ENCODE measurements at regions of chr17 and their contacts with region 1.

Region 1: GRCh38 chr17:78360371-78361224 is 721 bp upstream of the SOCS3 start:
- DNase-seq: peak; percentile 81
- H3K4me3 ChIP-seq: peak overlapping the region; percentile 52 to 87 (median 56)
- H3K27ac ChIP-seq: peak overlapping the region; percentile 39
- H3K4me1 ChIP-seq: peaks cover 34% of the 10 kb centered on the region
- H3K27me3 ChIP-seq: no peaks in the 10 kb centered on the region
- CTCF ChIP-seq: peak; percentile 80 to 98

Region 2: DNA sequence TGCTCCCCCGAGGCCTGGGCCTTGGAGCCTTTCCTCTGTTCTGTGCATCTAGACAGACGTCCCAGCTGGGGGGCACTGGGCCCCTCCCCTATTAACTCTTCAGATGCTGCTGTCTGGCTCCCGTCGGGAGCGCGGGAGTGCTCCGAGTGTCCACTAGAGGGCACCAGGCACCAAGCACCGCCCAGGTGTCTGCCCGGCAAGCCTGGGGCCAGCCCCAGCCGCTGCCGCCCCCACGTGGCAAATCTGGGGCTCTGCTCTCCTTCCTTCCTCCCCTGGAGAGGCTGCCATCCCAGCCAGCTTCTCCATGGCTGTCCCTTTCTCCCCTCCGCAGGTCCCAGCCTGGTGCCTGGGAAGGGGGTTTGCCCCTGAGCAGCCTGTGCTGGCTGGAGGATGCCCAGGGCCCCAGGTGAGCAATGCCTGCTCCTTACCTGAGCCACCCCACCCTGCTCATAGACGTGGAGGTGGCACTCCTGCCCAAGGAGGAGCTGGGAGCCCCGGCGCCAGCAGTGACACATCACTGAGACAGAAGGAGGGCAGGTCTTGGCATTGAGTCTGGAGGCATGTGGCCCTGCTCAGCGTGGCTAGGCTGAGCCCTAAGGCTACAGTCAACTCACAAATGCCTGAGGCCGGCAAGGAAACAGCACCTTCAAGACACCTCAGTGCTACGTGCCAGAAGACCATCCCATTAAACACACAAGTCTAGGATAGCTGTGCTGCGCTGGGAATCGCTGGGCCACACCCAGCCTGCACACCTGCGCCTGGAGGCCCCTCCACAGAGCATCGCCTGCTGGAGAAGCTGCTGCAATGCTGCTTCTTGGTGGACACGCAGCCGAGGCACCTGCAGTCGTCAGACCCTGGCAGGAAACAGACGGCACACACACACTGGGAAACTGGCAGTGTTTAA is 109.5 kb before region 1 on chr17:
- CTCF ChIA-PET with region 1: interaction called, 8 read pairs
- dilution Hi-C with region 1: no loop called
- in situ Hi-C with region 1: no loop called
- intact Hi-C with region 1: loop called (anchors 2 kb)
- DNase-seq: peak; percentile 81
- H3K4me3 ChIP-seq: peak overlapping the region in 2 of 3 experiments; percentile 27 to 38
- H3K27ac ChIP-seq: no peak overlapping the region
- H3K4me1 ChIP-seq: peaks cover 10% of the 10 kb centered on the region
- H3K27me3 ChIP-seq: no peaks in the 10 kb centered on the region
- CTCF ChIP-seq: peak; percentile 96 to 99

Region 3: DNA sequence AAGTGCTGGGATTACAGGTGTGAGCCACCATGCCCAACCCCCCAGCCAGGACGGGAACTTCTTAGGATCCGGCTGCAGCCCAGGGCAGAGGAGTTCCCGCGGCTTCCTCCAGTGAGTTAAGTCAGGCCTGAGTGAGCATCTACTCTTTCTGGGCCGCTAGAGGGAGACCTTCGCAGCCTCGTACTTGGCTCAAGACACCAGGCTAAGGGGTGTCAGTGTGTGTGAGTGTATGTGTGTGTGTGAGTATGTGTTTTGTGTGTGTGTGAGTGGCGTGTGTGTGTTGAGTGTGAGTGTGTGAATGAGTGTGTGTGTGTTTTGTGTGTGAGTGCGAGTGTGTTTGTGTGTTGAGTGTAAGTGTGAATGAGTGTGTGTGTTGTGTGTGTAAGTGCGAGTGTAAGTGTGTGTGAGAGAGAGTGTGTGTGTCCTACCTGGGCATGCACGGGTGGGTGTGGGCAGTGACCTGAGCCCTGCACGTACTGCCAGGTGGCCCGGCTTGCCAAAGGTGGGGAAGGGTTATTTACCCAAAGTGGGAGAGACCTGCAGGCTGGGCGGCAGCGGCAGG is 70.7 kb before region 1 on chr17:
- CTCF ChIA-PET with region 1: no interaction called
- dilution Hi-C with region 1: loop called (anchors 5 kb)
- in situ Hi-C with region 1: loop called in 1 of 2 experiments (anchors 5 kb)
- intact Hi-C with region 1: loop called (anchors 1 kb)
- DNase-seq: peak; percentile 80
- H3K4me3 ChIP-seq: no peak overlapping the region
- H3K27ac ChIP-seq: no peak overlapping the region
- H3K4me1 ChIP-seq: peaks cover 9% of the 10 kb centered on the region
- H3K27me3 ChIP-seq: no peaks in the 10 kb centered on the region
- CTCF ChIP-seq: peak; percentile 90 to 91

Region 4: DNA sequence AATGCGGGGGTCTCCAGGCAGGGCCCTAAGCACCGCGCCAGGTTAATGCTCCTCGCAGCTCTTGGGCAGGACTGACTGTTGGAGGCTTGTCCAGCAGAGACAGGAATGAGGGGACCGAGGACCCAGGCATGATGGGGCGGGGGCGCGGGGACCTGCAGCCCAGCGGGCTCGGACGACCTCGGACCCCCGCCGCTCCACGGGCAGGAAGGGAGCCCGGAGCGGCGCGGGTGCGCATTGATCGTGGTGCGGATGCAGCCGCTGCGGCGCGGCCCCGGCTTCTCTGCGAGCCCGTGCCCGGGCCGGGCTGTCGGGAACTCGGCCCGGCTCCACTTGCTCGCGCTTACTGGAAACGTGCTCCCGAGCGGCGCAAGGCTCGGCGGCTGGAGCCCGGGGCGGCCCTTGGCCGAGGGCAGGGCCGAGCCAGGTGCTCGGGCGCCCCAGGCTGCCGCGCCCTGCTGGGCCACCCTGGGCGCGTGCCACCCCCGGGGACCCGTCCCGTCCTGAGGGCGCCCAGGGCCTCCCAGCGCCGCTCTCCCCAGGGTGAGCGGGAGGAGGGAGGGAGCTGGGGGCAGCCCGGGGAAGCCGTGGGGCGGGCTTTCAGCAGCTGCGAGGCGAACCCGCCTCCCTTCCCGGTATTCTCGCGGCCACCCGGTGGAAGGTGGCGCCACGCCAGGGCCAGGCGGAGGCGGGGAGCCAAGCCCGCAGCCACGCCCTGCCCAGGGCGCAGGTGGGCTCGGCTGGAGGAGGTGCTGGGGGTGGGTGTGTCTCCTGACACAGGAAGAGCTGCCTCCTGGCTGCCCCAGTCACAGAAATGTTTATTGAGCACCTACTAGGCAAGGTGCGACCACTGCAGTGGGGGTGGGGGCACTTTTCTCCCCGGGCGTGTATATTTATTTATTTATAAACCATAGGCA is 46.6 kb before region 1 on chr17:
- CTCF ChIA-PET with region 1: no interaction called
- dilution Hi-C with region 1: no loop called
- in situ Hi-C with region 1: no loop called
- intact Hi-C with region 1: loop called (anchors 1 kb)
- DNase-seq: peak; percentile 93
- H3K4me3 ChIP-seq: peak overlapping the region in 2 of 3 experiments; percentile 33 to 46
- H3K27ac ChIP-seq: peak overlapping the region; percentile 79
- H3K4me1 ChIP-seq: peaks cover 46% of the 10 kb centered on the region
- H3K27me3 ChIP-seq: no peaks in the 10 kb centered on the region
- CTCF ChIP-seq: no peak

Region 5: GRCh38 chr17:78341559-78342448 is 18.8 kb before region 1 on chr17:
- CTCF ChIA-PET with region 1: no interaction called
- dilution Hi-C with region 1: no loop called
- in situ Hi-C with region 1: no loop called
- intact Hi-C with region 1: loop called (anchors 1 kb)
- DNase-seq: peak; percentile 65
- H3K4me3 ChIP-seq: peak overlapping the region in 2 of 3 experiments; percentile 17 to 31
- H3K27ac ChIP-seq: peak overlapping the region; percentile 82
- H3K4me1 ChIP-seq: peaks cover 37% of the 10 kb centered on the region
- H3K27me3 ChIP-seq: no peaks in the 10 kb centered on the region
- CTCF ChIP-seq: no peak

Region 6: GRCh38 chr17:78378225-78379130 is 17.9 kb after region 1 on chr17 and contains the start of gene PGS1:
- CTCF ChIA-PET with region 1: no interaction called
- dilution Hi-C with region 1: no loop called
- in situ Hi-C with region 1: no loop called
- intact Hi-C with region 1: loop called (anchors 1 kb)
- DNase-seq: peak; percentile 72
- H3K4me3 ChIP-seq: peak within 1 kb of the TSS; percentile 77 to 90 (median 89)
- H3K27ac ChIP-seq: peak within 1 kb of the TSS; percentile 92
- H3K4me1 ChIP-seq: peaks cover 43% of the 10 kb centered on the region
- H3K27me3 ChIP-seq: no peaks in the 10 kb centered on the region
- CTCF ChIP-seq: no peak
- total RNA-seq, gene PGS1: 29.1 to 31.5 TPM

Region 7: DNA sequence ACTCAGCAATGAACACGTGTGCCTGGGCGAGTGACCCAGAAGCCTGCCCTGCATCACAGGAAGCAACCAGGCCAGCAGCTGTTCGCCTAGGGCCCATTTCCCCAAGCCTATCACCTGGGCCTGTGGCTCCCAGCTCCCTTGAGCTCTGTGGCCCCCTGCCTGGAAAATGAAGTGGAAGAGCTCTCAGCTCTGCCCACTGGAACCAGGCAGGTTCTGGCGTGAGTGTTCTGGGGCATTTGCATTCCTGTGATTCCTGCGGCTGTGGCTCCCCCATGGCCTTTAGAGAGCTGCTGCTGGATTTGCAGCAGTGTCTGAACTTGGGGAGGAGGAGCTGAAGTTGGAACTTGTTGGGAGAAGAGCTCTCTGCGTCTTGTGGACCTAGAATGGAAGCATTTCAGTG is 40.6 kb after region 1 on chr17:
- CTCF ChIA-PET with region 1: interaction called, 5 read pairs
- dilution Hi-C with region 1: no loop called
- in situ Hi-C with region 1: no loop called
- intact Hi-C with region 1: loop called (anchors 1 kb)
- DNase-seq: peak; percentile 85
- H3K4me3 ChIP-seq: no peak overlapping the region
- H3K27ac ChIP-seq: peak overlapping the region; percentile 50
- H3K4me1 ChIP-seq: peaks cover 58% of the 10 kb centered on the region
- H3K27me3 ChIP-seq: no peaks in the 10 kb centered on the region
- CTCF ChIP-seq: peak in 1 of 2 donors; percentile 14

Measured in mammary epithelial cell (primary cell).